Activated naive CD4-positive, alpha-beta T cell treated with anti-CD3 and anti-CD28 coated beads for 36 hours (primary cell): ENCODE measurements at regions of chr20 and their contacts with region 1.

Region 1: GRCh38 chr20:2349818-2350508 is 30.7 kb upstream of the TGM6 start:
- DNase-seq: no peak
- H3K4me3 Mint-ChIP-seq: no peak overlapping the region
- H3K27ac Mint-ChIP-seq: no peak overlapping the region
- H3K4me1 Mint-ChIP-seq: no peaks in the 10 kb centered on the region
- H3K27me3 Mint-ChIP-seq: peaks cover 13% of the 10 kb centered on the region

Region 2: DNA sequence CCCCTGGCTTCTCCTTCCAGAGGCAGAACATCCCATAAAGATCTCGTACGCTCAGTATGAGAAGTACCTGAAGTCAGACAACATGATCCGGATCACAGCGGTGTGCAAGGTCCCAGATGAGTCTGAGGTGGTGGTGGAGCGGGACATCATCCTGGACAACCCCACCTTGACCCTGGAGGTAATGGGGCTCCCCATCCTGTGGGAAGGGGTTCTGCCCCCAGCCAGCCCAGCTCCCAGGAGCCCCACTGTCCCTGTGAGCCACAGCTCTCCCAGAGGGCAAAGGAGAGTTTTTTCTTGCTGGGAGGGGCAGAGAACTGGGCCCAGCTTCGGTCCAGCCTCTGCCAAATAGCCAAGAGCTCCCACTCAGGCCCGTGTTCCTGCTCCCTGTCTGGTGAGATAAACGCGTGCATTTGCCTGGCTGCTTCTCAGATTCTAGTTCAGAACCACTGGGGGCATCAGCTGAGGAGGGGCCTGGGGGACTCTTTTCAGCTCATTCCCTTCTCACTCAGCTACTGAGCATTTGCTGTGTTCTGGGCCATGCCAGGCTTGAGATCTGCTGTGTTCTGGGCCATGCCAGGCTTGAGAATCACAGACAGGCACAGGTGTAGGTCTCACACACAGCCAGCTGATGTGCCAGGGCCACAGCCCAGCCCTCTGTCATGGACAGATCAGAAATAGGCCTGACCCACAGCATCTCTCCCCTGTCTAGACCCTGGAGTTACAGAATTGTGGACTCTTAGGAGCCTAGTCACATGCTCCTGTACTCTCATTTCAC is 14.7 kb before region 1 on chr20:
- CTCF ChIA-PET with region 1: no interaction called
- intact Hi-C with region 1: no loop called
- DNase-seq: no peak
- H3K4me3 Mint-ChIP-seq: no peak overlapping the region
- H3K27ac Mint-ChIP-seq: no peak overlapping the region
- H3K4me1 Mint-ChIP-seq: no peaks in the 10 kb centered on the region
- H3K27me3 Mint-ChIP-seq: no peaks in the 10 kb centered on the region

Region 3: DNA sequence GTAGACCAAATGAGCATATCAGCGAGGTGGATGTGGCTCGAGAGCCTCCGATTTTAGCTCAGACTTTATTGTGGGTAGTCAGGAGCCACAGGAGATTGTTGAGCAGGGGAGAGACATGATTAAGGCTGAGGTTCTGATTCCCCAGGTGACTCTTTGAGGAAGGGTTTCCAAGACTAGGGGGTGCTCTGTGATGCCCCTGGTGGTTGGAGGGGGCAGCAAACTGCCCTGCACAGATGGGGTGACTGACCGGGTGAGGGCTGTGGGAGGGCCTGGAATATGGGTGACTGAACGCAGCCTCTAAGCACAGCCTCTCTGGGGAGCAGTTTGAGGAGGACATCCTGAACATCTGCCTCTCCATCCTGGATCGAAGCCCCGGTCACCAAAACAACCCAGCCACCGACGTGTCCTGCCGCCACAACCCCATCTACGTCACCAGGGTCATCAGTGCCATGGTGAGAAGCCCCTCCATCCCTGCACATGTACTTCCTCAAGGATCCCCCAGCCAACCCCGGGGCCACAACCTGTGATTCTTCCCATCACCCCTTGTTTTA is 47.7 kb after region 1 on chr20:
- CTCF ChIA-PET with region 1: no interaction called
- intact Hi-C with region 1: no loop called
- DNase-seq: no peak
- H3K4me3 Mint-ChIP-seq: no peak overlapping the region
- H3K27ac Mint-ChIP-seq: no peak overlapping the region
- H3K4me1 Mint-ChIP-seq: no peaks in the 10 kb centered on the region
- H3K27me3 Mint-ChIP-seq: no peaks in the 10 kb centered on the region

Region 4: DNA sequence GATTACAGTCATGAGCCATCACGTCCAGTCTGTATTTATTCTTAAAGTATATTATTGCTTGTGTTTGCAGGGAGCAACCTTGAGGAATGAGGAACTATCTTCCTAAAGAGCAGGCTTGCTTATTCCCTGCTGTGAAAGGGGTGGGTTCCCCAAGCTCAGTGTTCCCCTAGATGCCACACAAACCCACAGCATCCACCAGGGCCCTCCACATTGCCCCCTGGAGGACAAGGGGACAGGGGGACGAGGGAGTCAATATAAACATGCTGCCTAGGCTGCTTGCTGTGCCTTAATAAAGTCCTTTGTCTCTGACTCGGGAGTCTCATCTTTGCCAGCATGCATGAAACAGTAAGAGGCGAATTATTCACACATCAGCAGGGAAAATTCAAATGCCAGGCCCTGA is 322.0 kb after region 1 on chr20:
- CTCF ChIA-PET with region 1: no interaction called
- intact Hi-C with region 1: loop called (anchors 1 kb)
- DNase-seq: no peak
- H3K4me3 Mint-ChIP-seq: no peak overlapping the region
- H3K27ac Mint-ChIP-seq: no peak overlapping the region
- H3K4me1 Mint-ChIP-seq: no peaks in the 10 kb centered on the region
- H3K27me3 Mint-ChIP-seq: no peaks in the 10 kb centered on the region